HepG2 (cell line): ENCODE measurements at regions of chr16 and their contacts with region 1.

Region 1: DNA sequence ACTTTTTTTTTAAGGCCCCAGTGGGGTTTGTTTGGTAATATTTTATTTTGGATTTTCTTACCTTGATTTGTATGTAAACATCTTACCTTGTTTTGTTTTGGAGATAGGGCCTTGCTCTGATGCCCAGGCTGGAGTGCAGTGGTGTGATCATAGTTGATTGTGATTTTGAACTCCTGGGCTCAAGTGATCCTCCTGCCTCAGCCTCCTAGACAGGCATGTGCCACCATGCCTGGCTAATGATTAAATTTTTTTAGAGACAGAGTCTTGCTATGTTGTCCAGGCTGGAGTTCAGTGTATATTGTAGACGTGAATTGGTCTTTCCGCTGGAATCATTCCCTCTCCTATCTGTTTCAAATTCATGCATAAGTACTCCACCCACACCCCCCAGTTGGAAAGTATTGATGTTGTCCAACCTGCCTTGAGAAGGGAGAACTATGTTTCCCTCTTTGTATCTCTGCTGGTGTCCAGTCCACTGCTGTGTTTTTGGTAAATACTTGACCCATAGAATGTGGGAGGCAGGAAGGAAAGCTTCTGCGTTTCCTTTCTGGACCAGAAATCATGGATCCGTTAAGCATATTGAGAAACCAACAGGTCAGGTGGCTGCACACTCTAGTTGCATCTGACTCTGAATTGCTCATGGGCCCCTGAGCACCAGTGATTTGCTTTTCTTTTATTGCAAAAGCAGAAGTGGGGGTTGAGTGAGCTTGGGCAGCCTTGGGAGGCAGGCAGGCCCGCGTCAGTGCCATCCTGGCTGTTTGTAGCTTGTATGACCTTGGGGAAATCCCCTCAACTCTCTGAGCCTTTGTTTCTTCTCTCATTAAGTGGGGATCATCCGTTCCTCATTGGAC is 25.0 kb downstream of the RMI2 start:
- DNase-seq: peak; percentile 78
- ATAC-seq: peak; percentile 70
- H3K4me3 ChIP-seq: peak overlapping the region; percentile 23 to 56 (median 25); a peak in 3 of 6 replicates
- H3K27ac ChIP-seq: peak overlapping the region; percentile 74
- H3K4me1 ChIP-seq: peaks cover 68% of the 10 kb centered on the region
- H3K27me3 ChIP-seq: no peaks in the 10 kb centered on the region
- CTCF ChIP-seq: no peak
- EP300 ChIP-seq: peak in 1 of 2 experiments; percentile 41; a peak in 2 of 4 replicates
- POLR2A ChIP-seq: no peak; a peak in 1 of 4 replicates
- RAD21 ChIP-seq: no peak

Region 2: GRCh38 chr16:11155284-11155806 is 215.0 kb before region 1 on chr16:
- CTCF ChIA-PET with region 1: no interaction called
- POLR2A ChIA-PET with region 1: no interaction called
- in situ Hi-C with region 1: no loop called
- intact Hi-C with region 1: no loop called
- DNase-seq: no peak
- ATAC-seq: no peak
- H3K4me3 ChIP-seq: no peak overlapping the region
- H3K27ac ChIP-seq: no peak overlapping the region
- H3K4me1 ChIP-seq: peaks cover 19% of the 10 kb centered on the region
- H3K27me3 ChIP-seq: no peaks in the 10 kb centered on the region
- CTCF ChIP-seq: no peak
- EP300 ChIP-seq: no peak
- POLR2A ChIP-seq: no peak
- RAD21 ChIP-seq: no peak

Region 3: DNA sequence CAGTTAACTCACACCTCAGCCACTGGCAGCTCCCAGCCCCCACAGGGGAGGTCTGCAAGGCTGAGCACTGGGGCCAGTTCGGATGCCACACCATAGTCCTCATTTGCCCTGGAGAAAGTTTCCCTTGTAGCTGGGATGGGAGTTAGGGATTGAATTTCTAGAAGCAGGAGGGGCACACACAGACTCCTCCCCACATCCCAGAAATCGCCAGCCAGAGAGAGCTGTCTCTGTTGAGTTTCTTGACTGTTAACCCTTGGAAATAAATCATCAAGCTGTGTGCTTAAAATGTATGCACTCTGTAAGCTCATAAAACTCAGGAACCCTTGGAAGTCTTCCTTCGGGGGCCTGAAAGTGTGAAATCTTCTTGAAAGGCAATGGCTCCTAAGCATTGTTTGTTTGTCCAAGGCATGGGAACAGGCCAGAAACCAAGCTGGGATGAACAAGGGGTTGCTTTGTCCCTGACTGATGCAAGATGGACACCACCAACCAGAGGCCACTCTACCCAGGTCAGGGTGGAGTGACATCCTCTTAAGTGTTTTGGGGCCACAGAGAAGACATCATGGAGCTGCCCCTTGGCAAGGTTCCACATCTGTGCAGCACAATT is 96.5 kb before region 1 on chr16:
- CTCF ChIA-PET with region 1: no interaction called
- POLR2A ChIA-PET with region 1: interaction called, 21 read pairs
- in situ Hi-C with region 1: no loop called
- intact Hi-C with region 1: no loop called
- DNase-seq: peak; percentile 91
- ATAC-seq: peak; percentile 60
- H3K4me3 ChIP-seq: no peak overlapping the region
- H3K27ac ChIP-seq: peak overlapping the region; percentile 81
- H3K4me1 ChIP-seq: peaks cover 92% of the 10 kb centered on the region
- H3K27me3 ChIP-seq: no peaks in the 10 kb centered on the region
- CTCF ChIP-seq: no peak
- EP300 ChIP-seq: peak; percentile 11 to 68; a peak in 2 of 4 replicates
- POLR2A ChIP-seq: peak in 1 of 2 experiments; percentile 27; a peak in 1 of 4 replicates
- RAD21 ChIP-seq: 0 out of 2 replicates have a peak, but pooled peaks have one; percentile 22

Region 4: GRCh38 chr16:11297492-11298142 is 72.7 kb before region 1 on chr16:
- CTCF ChIA-PET with region 1: no interaction called
- POLR2A ChIA-PET with region 1: interaction called, 37 read pairs
- in situ Hi-C with region 1: no loop called
- intact Hi-C with region 1: loop called (anchors 2 kb)
- DNase-seq: peak; percentile 67
- ATAC-seq: peak; percentile 71
- H3K4me3 ChIP-seq: peak overlapping the region; percentile 15 to 67 (median 41)
- H3K27ac ChIP-seq: peak overlapping the region; percentile 68
- H3K4me1 ChIP-seq: peaks cover 97% of the 10 kb centered on the region
- H3K27me3 ChIP-seq: no peaks in the 10 kb centered on the region
- CTCF ChIP-seq: peak; percentile 47
- EP300 ChIP-seq: peak in 1 of 2 experiments; percentile 31; a peak in 1 of 4 replicates
- POLR2A ChIP-seq: 0 out of 4 replicates have a peak, but pooled peaks have one; percentile 31 to 50
- RAD21 ChIP-seq: peak; percentile 39; the same call in 1 of the 2 replicates

Region 5: GRCh38 chr16:11333711-11334110 is 36.6 kb before region 1 on chr16:
- CTCF ChIA-PET with region 1: no interaction called
- POLR2A ChIA-PET with region 1: no interaction called
- in situ Hi-C with region 1: no loop called
- intact Hi-C with region 1: loop called (anchors 1 kb)
- DNase-seq: no peak
- ATAC-seq: peak; percentile 62
- H3K4me3 ChIP-seq: no peak overlapping the region
- H3K27ac ChIP-seq: no peak overlapping the region
- H3K4me1 ChIP-seq: peaks cover 54% of the 10 kb centered on the region
- H3K27me3 ChIP-seq: no peaks in the 10 kb centered on the region
- CTCF ChIP-seq: no peak
- EP300 ChIP-seq: no peak
- POLR2A ChIP-seq: no peak
- RAD21 ChIP-seq: no peak

Region 6: GRCh38 chr16:11380836-11381235 is 10.5 kb after region 1 on chr16:
- CTCF ChIA-PET with region 1: interaction called, 3 read pairs
- POLR2A ChIA-PET with region 1: interaction called, 11 read pairs
- in situ Hi-C with region 1: no loop called
- intact Hi-C with region 1: no loop called
- DNase-seq: no peak
- ATAC-seq: no peak
- H3K4me3 ChIP-seq: no peak overlapping the region
- H3K27ac ChIP-seq: no peak overlapping the region
- H3K4me1 ChIP-seq: peaks cover 39% of the 10 kb centered on the region
- H3K27me3 ChIP-seq: peaks cover 10 to 26% of the 10 kb centered on the region in 2 experiments; a peak in 4 of 5 replicates
- CTCF ChIP-seq: 0 out of 2 replicates have a peak, but pooled peaks have one; percentile 11
- EP300 ChIP-seq: no peak
- POLR2A ChIP-seq: no peak
- RAD21 ChIP-seq: no peak

Region 7: DNA sequence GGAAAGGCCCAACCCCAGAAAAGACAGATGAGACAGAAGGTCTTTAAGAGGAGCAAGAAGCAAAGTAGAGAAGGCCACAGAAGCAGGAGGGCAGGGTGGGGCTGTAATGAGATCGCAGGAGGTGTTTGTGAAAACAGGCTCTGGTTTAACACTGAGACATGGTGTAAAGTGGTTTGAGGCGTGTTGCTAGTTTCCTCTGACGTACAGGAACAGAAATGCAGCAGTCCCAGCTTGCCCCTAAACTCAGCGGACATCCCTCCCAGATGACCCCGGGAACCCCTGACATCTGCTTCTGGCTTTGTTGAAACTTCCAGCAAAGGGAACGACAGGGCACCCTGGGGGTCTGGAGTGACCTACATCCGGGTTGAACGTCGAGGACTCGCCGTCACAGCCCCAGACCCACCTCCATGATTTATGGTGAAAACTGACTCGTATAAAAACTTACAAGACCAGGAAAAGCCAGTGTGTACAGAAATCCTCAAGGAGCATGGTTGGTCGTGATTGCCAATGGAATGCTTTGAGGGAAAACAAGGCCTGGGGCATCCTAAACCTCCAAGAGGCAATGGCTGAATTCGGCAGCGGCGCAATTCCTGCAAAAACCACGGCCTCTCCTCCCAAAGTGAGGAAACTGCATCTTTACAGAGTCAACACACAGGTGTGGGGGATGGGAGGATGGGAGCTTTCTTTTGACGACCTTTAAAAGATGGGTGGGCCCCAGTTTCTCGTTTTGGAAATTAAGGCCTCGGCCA is 190.6 kb after region 1 on chr16:
- CTCF ChIA-PET with region 1: no interaction called
- POLR2A ChIA-PET with region 1: no interaction called
- in situ Hi-C with region 1: no loop called
- intact Hi-C with region 1: no loop called
- DNase-seq: no peak
- ATAC-seq: no peak
- H3K4me3 ChIP-seq: no peak overlapping the region
- H3K27ac ChIP-seq: peak overlapping the region; percentile 15
- H3K4me1 ChIP-seq: peaks cover 64% of the 10 kb centered on the region
- H3K27me3 ChIP-seq: no peaks in the 10 kb centered on the region
- CTCF ChIP-seq: no peak
- EP300 ChIP-seq: no peak
- POLR2A ChIP-seq: no peak
- RAD21 ChIP-seq: no peak

Region 8: GRCh38 chr16:12348733-12349704 is 978.7 kb after region 1 on chr16:
- CTCF ChIA-PET with region 1: no interaction called
- POLR2A ChIA-PET with region 1: no interaction called
- in situ Hi-C with region 1: no loop called
- intact Hi-C with region 1: no loop called
- DNase-seq: peak; percentile 23
- ATAC-seq: peak; percentile 70
- H3K4me3 ChIP-seq: no peak overlapping the region
- H3K27ac ChIP-seq: no peak overlapping the region
- H3K4me1 ChIP-seq: peaks cover 12% of the 10 kb centered on the region
- H3K27me3 ChIP-seq: no peaks in the 10 kb centered on the region
- CTCF ChIP-seq: no peak
- EP300 ChIP-seq: no peak
- POLR2A ChIP-seq: no peak
- RAD21 ChIP-seq: no peak